ENCODE measurements at regions of chr6 and their contacts with region 1.

Region 1: GRCh38 chr6:56314683-56315523 is 67.5 kb upstream of the COL21A1 start:
- DNase-seq: no peak
- H3K4me3 ChIP-seq: no peak overlapping the region
- H3K27ac ChIP-seq: no peak overlapping the region
- H3K27me3 ChIP-seq: no peaks in the 10 kb centered on the region
- CTCF ChIP-seq: peak; percentile 86

Region 2: DNA sequence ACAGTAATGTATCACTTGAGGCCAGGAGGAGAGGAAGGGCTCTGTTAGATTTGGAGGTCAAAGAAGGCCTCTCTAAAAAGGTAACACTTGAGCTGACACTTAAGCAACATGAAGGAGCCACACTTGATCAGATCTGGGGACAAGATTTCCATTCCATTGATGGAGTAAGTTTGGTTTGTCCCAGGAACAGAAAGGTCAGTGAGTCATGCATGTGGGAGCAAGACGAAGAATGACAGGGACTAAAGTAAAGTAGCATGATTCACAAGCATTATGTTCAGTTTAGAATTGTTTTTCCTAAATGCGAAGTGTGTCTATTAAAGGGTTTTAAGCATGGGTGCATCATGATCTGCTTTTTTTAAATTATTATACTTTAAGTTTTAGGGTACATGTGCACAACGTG is 114.9 kb before region 1 on chr6:
- CTCF ChIA-PET with region 1: no interaction called
- POLR2A ChIA-PET with region 1: no interaction called
- DNase-seq: no peak
- H3K4me3 ChIP-seq: no peak overlapping the region
- H3K27ac ChIP-seq: no peak overlapping the region
- H3K27me3 ChIP-seq: no peaks in the 10 kb centered on the region
- CTCF ChIP-seq: no peak

Region 3: DNA sequence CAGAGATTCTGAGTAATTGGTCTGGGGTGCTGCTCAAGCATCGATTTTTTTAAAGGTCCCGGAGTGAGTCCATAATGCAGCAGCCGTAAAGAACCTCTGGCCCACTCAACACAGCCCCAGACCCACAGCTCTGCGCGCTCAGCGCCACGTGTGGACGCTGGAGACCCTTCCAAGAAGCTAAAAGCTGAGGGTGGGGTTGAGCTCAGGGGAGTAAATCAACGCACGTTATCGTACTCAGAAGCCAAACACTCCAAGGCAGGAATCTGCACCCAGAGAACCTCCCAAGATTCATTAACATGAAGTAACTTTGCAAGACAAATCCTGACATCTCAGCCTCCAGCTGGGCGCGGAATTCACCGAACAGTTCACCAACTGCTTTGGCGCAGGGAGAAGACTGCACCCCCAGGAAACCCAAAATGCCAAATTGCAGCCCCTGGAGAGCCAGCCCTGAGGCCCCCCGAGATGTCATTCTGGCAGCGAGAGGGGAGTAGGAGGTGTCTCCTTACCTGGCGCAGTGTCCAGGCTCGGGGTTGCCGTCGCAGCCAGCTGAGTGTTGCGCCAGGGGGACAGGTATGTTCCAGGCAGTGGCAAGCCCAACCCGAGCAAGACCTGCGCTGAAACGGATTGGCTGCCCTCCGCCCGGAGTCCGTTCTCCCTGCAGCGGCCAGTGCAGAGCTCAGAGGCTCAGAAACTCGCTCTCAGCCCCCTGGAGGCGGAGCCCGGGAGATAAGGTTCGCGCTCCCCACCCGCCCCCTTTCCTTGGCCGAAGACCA is 67.8 kb before region 1 on chr6 and contains the start of gene COL21A1:
- CTCF ChIA-PET with region 1: no interaction called
- POLR2A ChIA-PET with region 1: no interaction called
- DNase-seq: no peak
- H3K4me3 ChIP-seq: peak within 1 kb of the TSS; percentile 49
- H3K27ac ChIP-seq: no peak within 1 kb of the TSS
- H3K27me3 ChIP-seq: peaks cover 7% of the 10 kb centered on the region
- CTCF ChIP-seq: peak; percentile 41
- polyA plus RNA-seq, gene COL21A1: 0.35 and 0.40 TPM in 2 replicates

Region 4: GRCh38 chr6:56329271-56330050 is 14.6 kb after region 1 on chr6:
- CTCF ChIA-PET with region 1: interaction called, 28 read pairs
- POLR2A ChIA-PET with region 1: no interaction called
- DNase-seq: no peak
- H3K4me3 ChIP-seq: no peak overlapping the region
- H3K27ac ChIP-seq: peak overlapping the region; percentile 41
- H3K27me3 ChIP-seq: no peaks in the 10 kb centered on the region
- CTCF ChIP-seq: no peak

Region 5: DNA sequence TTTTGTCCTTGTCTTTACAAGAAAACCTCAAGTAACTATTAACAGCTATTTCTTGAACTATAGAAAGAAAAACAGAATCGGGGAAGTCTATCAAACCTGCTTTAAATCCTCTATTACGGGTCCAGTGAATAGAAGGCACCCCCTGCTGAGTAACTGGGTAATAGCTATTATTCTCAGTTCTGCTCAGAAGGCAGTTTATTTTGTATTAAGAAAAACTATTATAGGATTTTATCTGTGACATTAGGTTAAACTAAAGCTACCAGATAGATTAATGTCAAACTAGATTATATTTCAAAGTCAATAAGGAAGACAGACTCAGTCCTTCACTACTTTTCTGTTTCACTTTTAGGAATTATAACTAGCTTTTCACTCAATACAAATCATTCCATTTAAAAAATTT is 234.1 kb after region 1 on chr6:
- CTCF ChIA-PET with region 1: interaction called, 10 read pairs
- POLR2A ChIA-PET with region 1: no interaction called
- DNase-seq: no peak
- H3K4me3 ChIP-seq: no peak overlapping the region
- H3K27ac ChIP-seq: no peak overlapping the region
- H3K27me3 ChIP-seq: no peaks in the 10 kb centered on the region
- CTCF ChIP-seq: peak; percentile 47